A549 (cell line): ENCODE measurements at regions of chr20 and their contacts with region 1.

Region 1: GRCh38 chr20:48620519-48621254 is 207.1 kb downstream of the PREX1 start:
- DNase-seq: peak; percentile 84 to 92
- ATAC-seq: peak; percentile 87 to 94
- H3K4me3 ChIP-seq: peak overlapping the region; percentile 42
- H3K27ac ChIP-seq: peak overlapping the region; percentile 80 to 83
- H3K4me1 ChIP-seq: peaks cover 28% of the 10 kb centered on the region
- CTCF ChIP-seq: peak; percentile 73
- EP300 ChIP-seq: no peak
- POLR2A ChIP-seq: no peak
- RAD21 ChIP-seq: peak; percentile 93 to 95

Region 2: GRCh38 chr20:47663333-47664067 is 957.2 kb before region 1 on chr20:
- CTCF ChIA-PET with region 1: interaction called, 73 read pairs
- POLR2A ChIA-PET with region 1: no interaction called
- DNase-seq: peak; percentile 76 to 80
- ATAC-seq: peak; percentile 76 to 84
- H3K4me3 ChIP-seq: no peak overlapping the region
- H3K27ac ChIP-seq: peak overlapping the region in 1 of 2 experiments; percentile 64; a peak in 3 of 6 replicates
- H3K4me1 ChIP-seq: peaks cover 4% of the 10 kb centered on the region; the same call in 1 of the 3 replicates
- CTCF ChIP-seq: peak; percentile 87
- EP300 ChIP-seq: no peak
- POLR2A ChIP-seq: no peak
- RAD21 ChIP-seq: peak; percentile 72 to 76

Region 3: DNA sequence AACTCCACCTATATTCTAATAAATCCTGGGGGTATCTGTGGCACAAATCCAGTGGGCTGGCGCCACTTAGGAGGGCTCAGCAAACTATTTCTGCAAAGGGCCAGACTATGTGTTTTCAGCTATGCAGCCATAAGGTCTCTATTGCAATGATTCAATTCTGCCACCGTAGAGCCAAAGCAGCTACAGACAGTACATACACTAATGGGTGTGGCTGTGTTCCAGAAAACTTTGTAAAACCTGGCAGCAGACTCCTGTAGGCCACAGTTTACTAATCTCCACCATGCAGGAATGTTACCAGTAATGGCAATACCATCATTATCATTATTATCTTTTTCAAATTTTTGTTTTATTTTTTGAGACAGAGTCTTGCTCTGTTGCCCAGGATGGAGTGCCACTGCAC is 901.1 kb before region 1 on chr20:
- CTCF ChIA-PET with region 1: interaction called, 44 read pairs
- POLR2A ChIA-PET with region 1: no interaction called
- DNase-seq: no peak
- ATAC-seq: no peak; a peak in 1 of 6 replicates
- H3K4me3 ChIP-seq: no peak overlapping the region
- H3K27ac ChIP-seq: no peak overlapping the region
- H3K4me1 ChIP-seq: no peaks in the 10 kb centered on the region
- CTCF ChIP-seq: no peak
- EP300 ChIP-seq: no peak
- POLR2A ChIP-seq: no peak
- RAD21 ChIP-seq: no peak

Region 4: GRCh38 chr20:47792021-47792618 is 828.6 kb before region 1 on chr20:
- CTCF ChIA-PET with region 1: interaction called, 91 read pairs
- POLR2A ChIA-PET with region 1: no interaction called
- DNase-seq: peak in 1 of 2 experiments; percentile 47
- ATAC-seq: peak; percentile 73 to 76
- H3K4me3 ChIP-seq: no peak overlapping the region
- H3K27ac ChIP-seq: peak overlapping the region; percentile 30 to 62; a peak in 3 of 6 replicates
- H3K4me1 ChIP-seq: peaks cover 22% of the 10 kb centered on the region
- CTCF ChIP-seq: no peak
- EP300 ChIP-seq: no peak
- POLR2A ChIP-seq: no peak
- RAD21 ChIP-seq: no peak

Region 5: DNA sequence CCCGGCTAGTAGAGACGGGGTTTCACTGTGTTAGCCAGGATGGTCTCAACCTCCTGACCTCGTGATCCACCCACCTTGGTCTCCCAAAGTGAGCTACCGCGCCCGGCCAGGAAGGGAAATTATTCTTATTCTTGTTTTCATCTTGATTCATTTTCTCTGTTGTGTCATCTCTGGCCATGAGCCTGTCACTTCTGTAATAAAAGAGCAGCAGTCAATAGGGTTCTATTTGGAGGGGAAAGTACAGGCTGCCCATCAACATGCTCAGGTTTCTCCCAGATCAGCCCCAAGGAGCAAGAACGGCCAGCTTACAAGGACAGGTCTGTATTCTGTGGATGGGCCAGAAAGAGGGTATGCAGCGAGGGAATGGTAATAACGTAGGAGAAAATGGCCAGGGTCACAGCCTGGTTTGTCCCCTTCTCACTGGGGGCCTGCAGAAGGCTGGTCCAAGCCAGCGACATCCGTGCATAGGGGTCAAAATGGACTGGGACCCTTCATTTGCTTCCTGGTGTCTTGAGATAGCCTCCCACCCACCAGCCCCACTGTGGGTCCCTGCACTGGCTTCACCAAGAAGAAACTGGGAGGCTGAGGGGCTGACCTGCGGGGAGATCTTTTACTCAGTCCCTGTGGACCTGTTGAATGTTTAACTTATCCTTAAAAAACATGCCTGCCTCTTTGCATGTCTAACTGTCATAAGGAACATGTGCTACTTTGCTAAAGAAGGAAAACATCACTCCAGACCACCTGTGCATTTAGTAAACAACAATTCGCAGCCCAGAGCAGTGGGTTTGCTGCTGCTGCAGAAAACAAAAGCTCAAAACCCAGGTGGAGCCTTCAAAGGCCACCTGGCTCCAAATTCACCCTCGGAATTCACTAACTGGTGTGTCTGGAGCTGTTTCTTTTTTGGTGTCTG is 137.6 kb before region 1 on chr20:
- CTCF ChIA-PET with region 1: interaction called, 10 read pairs
- POLR2A ChIA-PET with region 1: no interaction called
- DNase-seq: no peak
- ATAC-seq: no peak
- H3K4me3 ChIP-seq: no peak overlapping the region
- H3K27ac ChIP-seq: no peak overlapping the region
- H3K4me1 ChIP-seq: peaks cover 25% of the 10 kb centered on the region
- CTCF ChIP-seq: no peak
- EP300 ChIP-seq: no peak
- POLR2A ChIP-seq: no peak
- RAD21 ChIP-seq: no peak

Region 6: DNA sequence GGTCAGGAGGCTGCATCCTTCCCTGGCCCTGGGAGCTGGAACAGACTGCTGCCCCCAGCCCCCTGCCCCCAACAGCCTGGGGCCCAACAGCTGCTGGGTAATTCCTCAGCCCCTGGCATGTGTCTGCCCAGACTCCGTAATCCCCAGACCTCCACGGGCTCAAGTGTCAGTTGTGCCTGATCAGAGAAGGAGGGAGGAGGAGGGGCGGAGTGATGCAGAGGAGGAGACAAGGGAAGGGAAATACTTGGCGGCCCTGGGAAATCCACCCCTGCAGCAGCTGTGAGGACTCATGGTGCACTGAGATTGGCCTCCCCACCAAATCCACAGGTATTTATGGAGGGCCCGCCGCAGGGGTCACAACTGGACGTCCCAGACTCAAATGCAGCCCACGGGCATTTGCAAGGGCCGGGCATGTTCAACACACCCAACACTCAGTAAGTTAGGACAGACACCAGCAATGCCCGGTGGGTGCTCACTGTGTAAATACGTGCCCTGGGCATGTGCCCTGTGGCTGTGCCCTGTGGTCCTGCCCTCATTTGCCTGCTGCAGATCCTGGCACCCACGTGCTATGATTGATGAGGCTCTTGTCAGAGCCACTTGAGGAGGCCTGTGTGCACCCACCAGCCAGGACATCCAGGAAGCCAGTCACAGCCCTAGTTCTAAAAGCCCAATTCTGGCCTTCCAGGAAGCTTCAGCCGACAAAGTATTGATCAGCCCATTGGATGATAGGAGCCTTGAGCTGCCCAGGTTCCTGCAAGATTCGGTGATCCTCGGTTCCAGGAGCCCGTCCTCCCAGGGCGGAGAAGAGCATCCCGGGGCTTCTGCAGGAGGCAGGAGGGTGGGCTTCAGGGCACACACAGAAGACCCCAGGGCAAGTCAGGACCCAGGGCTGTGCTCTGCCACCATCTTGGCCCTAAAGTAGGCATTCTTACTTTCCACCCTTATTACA is 17.0 kb before region 1 on chr20:
- CTCF ChIA-PET with region 1: interaction called, 12 read pairs
- POLR2A ChIA-PET with region 1: no interaction called
- DNase-seq: no peak
- ATAC-seq: no peak
- H3K4me3 ChIP-seq: no peak overlapping the region
- H3K27ac ChIP-seq: no peak overlapping the region
- H3K4me1 ChIP-seq: no peaks in the 10 kb centered on the region
- CTCF ChIP-seq: no peak
- EP300 ChIP-seq: no peak
- POLR2A ChIP-seq: no peak
- RAD21 ChIP-seq: no peak